ENCODE measurements at regions of chr12 and their contacts with region 1.

Region 1: DNA sequence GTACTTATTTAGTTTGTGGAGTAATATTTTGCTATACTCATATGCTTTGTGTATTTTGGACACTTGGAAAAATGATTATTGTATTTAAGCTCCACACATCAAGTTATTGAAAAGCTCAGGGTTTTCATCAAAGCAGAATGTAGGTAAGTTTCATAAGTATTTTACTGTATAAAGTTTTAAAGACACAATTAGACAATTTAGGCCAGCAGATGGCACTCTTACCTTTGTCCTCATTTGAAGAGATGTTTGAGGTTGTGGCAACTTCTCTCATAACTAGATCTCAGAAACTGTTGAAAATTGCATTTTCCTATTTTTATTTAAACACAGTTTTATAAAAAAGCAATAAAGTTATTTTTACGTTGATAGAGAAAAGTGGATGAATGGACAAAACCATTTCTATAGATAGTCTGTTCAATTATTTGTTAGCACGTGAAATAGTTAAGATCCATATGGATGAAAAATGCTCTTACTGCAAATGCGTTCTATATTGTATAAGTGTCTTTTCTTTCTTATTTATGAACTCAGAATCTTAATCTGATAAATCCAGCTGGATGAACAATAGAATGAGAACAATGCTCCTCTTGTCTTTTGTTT is 300.0 kb downstream of the AEBP2 start:
- DNase-seq: peak; percentile 16
- H3K4me3 ChIP-seq: no peak overlapping the region
- H3K27ac ChIP-seq: no peak overlapping the region
- H3K4me1 ChIP-seq: peaks cover 0 to 5% (median 2%) of the 10 kb centered on the region in 4 donors
- H3K27me3 ChIP-seq: no peaks in the 10 kb centered on the region
- CTCF ChIP-seq: peak; percentile 44 to 56 (median 54)
- EP300 ChIP-seq: no peak
- POLR2A ChIP-seq: no peak

Region 2: DNA sequence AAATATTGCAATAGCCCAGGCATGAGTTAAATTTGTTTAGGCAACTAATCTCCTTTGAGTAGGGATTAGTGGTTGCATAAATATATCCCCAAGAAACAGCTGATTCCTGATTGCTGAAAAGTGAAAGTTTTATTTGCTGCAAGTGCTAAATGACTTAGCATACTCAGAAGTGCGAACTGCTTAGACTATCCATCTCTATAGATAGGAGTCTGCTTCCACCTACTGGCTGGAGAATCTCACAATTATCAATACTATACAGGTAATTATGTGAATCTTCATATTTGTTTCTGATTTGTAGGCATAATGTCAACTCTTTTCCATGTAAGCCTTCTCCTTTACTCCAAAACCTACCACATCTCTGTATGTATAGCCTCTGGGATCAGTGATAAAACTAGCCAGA is 1059.3 kb after region 1 on chr12:
- in situ Hi-C with region 1: no loop called
- intact Hi-C with region 1: loop called (anchors 5 kb)
- DNase-seq: no peak
- H3K4me3 ChIP-seq: no peak overlapping the region
- H3K27ac ChIP-seq: no peak overlapping the region
- H3K4me1 ChIP-seq: peaks cover 0 to 3% (median 0%) of the 10 kb centered on the region in 4 donors
- H3K27me3 ChIP-seq: no peaks in the 10 kb centered on the region
- CTCF ChIP-seq: peak; percentile 43 to 63 (median 54)
- EP300 ChIP-seq: no peak
- POLR2A ChIP-seq: no peak

Measured in transverse colon (tissue), 4 donors.